GM18951 (cell line): ENCODE measurements at regions of chr12 and their contacts with region 1.

Region 1: GRCh38 chr12:24822121-24822899 is 126.6 kb downstream of the BCAT1 start:
- POLR2A ChIP-seq: no peak

Region 2: GRCh38 chr12:23204933-23205778 is 1617.2 kb before region 1 on chr12:
- in situ Hi-C with region 1: loop called (anchors 25 kb)
- POLR2A ChIP-seq: no peak

Region 3: DNA sequence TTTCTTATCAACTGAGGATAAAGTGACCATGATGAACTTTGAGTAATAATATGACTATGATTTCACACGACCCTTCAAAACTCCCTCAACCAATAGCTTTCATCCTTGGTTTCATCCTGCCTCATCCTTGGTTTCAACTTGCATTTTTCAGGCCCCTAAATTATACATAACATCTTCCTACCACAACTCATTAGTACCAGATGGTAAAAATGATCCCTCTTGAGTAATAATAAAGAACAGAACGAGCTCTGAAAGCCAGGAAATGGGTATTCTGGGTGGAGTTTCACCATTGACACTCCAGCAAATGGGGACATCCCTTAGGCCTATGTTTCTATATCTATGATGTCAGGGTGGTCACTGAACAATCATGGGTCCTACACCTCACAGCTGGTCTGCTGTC is 802.8 kb after region 1 on chr12:
- in situ Hi-C with region 1: no loop called
- POLR2A ChIP-seq: no peak